ENCODE measurements at regions of chr9 and their contacts with region 1.

Region 1: GRCh38 chr9:122350638-122351355 is 20.0 kb upstream of the PTGS1 start:
- DNase-seq: peak; percentile 31
- H3K4me3 ChIP-seq: no peak overlapping the region
- CTCF ChIP-seq: peak; percentile 94

Region 2: GRCh38 chr9:122125158-122125508 is 225.7 kb before region 1 on chr9:
- in situ Hi-C with region 1: loop called (anchors 5 kb)
- DNase-seq: peak; percentile 50
- H3K4me3 ChIP-seq: no peak overlapping the region
- CTCF ChIP-seq: peak; percentile 96

Region 3: DNA sequence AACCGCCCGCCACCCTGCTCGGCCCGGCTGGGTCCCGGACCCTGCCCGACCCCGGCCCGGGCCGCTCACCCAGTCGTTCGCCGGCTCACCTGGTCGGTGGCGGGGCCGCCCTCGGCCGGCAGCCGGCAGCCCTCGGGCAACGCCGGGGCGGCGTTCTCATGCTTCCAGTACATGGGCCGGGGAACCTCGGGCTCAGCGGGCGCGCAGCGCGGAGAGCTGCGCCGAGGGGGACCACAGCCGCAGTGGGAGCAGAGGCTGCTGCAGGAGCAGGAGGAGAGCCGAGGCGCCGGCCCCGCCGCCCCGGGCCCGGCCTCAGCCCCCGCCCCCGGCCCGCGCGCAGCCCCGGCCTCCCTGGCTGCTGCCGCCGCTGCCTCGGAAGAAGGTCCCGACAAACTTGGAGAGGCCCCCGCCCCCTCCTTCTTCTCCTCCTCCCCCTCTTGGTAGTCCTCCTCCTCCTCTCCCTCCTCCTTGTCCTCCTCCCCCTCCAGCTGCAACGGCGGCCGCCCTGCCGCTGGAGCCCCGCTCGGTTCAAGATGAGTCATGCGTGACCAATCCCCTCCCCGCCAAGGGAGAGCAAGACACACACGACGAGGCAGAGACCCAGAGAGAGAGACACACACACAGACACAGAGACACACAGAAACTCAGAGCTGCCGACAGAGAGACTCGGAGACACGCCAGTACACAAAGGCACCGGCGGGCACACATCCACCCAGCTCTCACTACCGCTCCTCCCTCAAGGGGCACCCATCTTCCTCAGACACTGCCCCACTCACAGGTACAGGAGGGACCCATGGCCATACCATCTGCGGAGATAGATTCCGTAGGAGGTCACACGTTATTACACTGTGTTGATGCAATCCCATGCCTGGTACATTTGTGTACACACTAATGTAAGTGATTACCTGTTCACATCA is 122.0 kb before region 1 on chr9 and contains the start of gene LHX6:
- in situ Hi-C with region 1: loop called (anchors 25 kb)
- DNase-seq: no peak
- H3K4me3 ChIP-seq: peak within 1 kb of the TSS; percentile 15
- CTCF ChIP-seq: no peak

Measured in astrocyte of the cerebellum (primary cell).